ENCODE measurements at regions of chr6 and their contacts with region 1.

Region 1: DNA sequence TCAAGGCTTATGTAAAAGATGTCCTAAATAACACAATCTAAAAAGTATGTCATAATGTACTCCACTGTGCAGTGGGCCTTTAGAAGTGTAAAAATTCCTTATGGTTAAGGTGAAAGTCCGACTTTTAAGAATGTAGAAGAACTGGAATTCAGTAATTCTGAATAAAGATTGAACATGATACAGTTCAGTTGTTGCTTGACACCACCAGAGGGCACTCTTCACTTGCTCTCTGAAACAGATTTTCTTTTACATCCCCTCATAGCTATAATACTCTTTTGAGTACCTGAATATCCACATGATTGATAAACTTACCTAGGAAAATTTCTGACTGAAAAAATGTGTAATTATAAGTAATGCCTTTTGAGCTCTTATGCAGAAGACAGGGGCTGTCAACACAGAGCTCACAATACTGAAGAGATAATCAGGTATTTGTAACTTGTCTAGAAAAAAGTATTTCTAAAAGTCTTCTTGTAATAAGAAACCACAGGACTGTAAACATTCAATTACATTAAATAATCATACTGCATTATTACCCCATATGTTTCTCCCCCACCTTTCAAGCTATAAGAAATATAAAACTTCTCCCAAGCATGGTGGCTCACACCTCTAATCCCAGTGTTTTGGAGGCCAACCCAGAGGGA is 92.1 kb downstream of the POPDC3 start:
- DNase-seq: no peak
- ATAC-seq: peak; percentile 67
- H3K4me3 ChIP-seq: no peak overlapping the region
- H3K27ac ChIP-seq: no peak overlapping the region
- H3K4me1 ChIP-seq: 0 out of 2 replicates have a peak, but pooled peaks cover 2% of the 10 kb centered on the region
- H3K27me3 ChIP-seq: no peaks in the 10 kb centered on the region
- CTCF ChIP-seq: peak; percentile 81; the same call in 1 of the 2 replicates

Region 2: GRCh38 chr6:104784884-104785283 is 302.8 kb before region 1 on chr6:
- CTCF ChIA-PET with region 1: no interaction called
- POLR2A ChIA-PET with region 1: no interaction called
- in situ Hi-C with region 1: no loop called
- intact Hi-C with region 1: no loop called
- DNase-seq: no peak
- ATAC-seq: no peak
- H3K4me3 ChIP-seq: no peak overlapping the region
- H3K27ac ChIP-seq: no peak overlapping the region
- H3K4me1 ChIP-seq: peaks cover 5% of the 10 kb centered on the region; the same call in 1 of the 2 replicates
- H3K27me3 ChIP-seq: no peaks in the 10 kb centered on the region
- CTCF ChIP-seq: no peak

Region 3: GRCh38 chr6:104955927-104956730 is 131.6 kb before region 1 on chr6:
- CTCF ChIA-PET with region 1: no interaction called
- POLR2A ChIA-PET with region 1: interaction called, 11 read pairs
- in situ Hi-C with region 1: no loop called
- intact Hi-C with region 1: no loop called
- DNase-seq: no peak
- ATAC-seq: peak; percentile 57
- H3K4me3 ChIP-seq: peak overlapping the region; percentile 71 to 86
- H3K27ac ChIP-seq: peak overlapping the region; percentile 97
- H3K4me1 ChIP-seq: peaks cover 15% of the 10 kb centered on the region
- H3K27me3 ChIP-seq: no peaks in the 10 kb centered on the region; the same call in 1 of the 2 replicates
- CTCF ChIP-seq: peak; percentile 52

Region 4: DNA sequence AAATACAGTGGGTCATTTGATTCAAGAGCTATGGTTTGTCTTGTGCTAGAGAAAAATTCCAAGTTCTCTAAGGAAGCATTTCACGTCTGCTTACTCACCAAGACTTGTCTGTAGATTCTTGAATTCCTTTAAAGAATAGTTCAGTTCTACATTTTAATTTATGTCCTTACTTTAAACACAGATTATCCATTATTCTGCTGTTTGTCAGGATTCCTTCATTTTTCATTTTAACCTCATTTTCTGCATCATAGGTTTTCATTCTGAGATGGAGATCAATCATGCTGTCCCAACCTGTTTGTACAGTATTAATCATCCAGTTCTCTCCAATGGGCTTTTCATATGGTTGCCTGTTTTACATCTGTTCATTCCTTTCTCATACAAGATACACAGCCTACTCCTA is 116.6 kb after region 1 on chr6:
- CTCF ChIA-PET with region 1: no interaction called
- POLR2A ChIA-PET with region 1: no interaction called
- in situ Hi-C with region 1: no loop called
- intact Hi-C with region 1: no loop called
- DNase-seq: no peak
- ATAC-seq: no peak
- H3K4me3 ChIP-seq: no peak overlapping the region
- H3K27ac ChIP-seq: no peak overlapping the region
- H3K4me1 ChIP-seq: no peaks in the 10 kb centered on the region
- H3K27me3 ChIP-seq: no peaks in the 10 kb centered on the region
- CTCF ChIP-seq: no peak

Region 5: DNA sequence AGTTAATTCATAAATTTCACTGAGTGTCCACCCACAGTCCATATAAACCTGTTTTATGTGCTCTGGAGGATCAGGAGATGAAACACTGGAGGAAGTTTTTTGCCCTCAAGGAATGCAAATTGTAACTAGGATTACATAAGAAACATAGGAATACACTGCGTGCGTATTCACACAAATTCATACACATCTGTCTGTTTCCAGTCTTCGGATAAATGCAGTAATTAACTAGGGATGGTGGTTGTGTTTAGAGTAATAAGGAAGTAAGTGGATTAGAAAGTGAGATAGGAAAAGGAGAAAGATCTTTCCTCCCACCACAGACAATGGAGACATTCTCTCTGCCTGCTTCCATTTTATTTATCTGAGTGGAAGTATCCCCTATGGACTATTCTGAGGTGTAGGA is 127.8 kb after region 1 on chr6:
- CTCF ChIA-PET with region 1: no interaction called
- POLR2A ChIA-PET with region 1: no interaction called
- in situ Hi-C with region 1: no loop called
- intact Hi-C with region 1: no loop called
- DNase-seq: no peak
- ATAC-seq: no peak
- H3K4me3 ChIP-seq: no peak overlapping the region
- H3K27ac ChIP-seq: no peak overlapping the region
- H3K4me1 ChIP-seq: no peaks in the 10 kb centered on the region
- H3K27me3 ChIP-seq: peaks cover 2% of the 10 kb centered on the region; the same call in 1 of the 2 replicates
- CTCF ChIP-seq: no peak

Region 6: GRCh38 chr6:105272786-105273185 is 185.1 kb after region 1 on chr6:
- CTCF ChIA-PET with region 1: no interaction called
- POLR2A ChIA-PET with region 1: no interaction called
- in situ Hi-C with region 1: no loop called
- intact Hi-C with region 1: loop called (anchors 10 kb)
- DNase-seq: no peak
- ATAC-seq: peak; percentile 72
- H3K4me3 ChIP-seq: no peak overlapping the region
- H3K27ac ChIP-seq: no peak overlapping the region
- H3K4me1 ChIP-seq: no peaks in the 10 kb centered on the region
- H3K27me3 ChIP-seq: no peaks in the 10 kb centered on the region
- CTCF ChIP-seq: no peak

Region 7: DNA sequence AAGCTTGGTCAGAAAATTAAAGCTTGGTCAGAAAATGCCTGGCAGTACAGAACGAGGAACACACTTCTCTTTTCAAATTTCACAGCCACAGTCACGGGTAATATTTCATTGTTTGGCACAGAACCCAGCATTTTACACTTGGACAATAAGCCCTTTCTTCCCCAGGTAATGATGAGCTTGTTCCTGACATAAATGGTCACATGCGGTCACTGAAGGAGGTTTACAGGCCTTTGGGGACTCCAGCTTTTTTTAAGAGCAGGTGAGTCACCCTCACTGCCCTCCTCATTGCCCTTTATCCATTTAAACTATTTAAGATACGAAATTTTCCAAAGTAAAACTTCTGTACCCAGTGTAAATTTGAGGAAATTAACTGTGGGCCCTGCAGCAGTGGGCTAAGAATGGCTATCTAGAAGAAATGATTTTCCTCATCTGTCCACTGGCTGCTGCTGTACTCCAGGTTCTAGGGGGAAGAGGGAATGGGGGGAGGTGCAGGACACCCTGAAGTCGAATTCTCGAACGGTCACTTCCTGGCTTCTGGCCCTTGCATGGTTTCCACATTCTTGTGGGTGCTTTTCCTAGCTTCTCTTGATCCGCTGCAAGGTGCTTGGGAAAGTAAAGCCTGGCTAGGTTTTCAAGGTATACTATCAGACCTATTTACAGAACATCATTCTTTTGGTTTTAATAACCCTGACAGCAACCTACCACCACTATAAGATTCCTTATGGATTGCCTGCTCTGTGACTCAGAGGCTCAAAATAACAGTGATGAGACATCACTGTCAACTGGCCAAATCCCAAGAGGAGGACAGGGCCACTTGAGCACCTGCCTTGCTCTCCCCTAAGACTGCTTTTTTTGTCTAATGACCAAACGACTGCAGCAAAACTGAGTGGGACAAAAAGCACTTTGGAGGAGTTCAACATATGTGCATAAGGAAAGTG is 239.4 kb after region 1 on chr6:
- CTCF ChIA-PET with region 1: no interaction called
- POLR2A ChIA-PET with region 1: no interaction called
- in situ Hi-C with region 1: no loop called
- intact Hi-C with region 1: no loop called
- DNase-seq: peak; percentile 66
- ATAC-seq: peak; percentile 71
- H3K4me3 ChIP-seq: no peak overlapping the region
- H3K27ac ChIP-seq: 0 out of 2 replicates have a peak overlapping the region, but pooled peaks have one; percentile 1
- H3K4me1 ChIP-seq: peaks cover 2% of the 10 kb centered on the region; the same call in 1 of the 2 replicates
- H3K27me3 ChIP-seq: no peaks in the 10 kb centered on the region
- CTCF ChIP-seq: no peak

Region 8: GRCh38 chr6:105363100-105363754 is 275.5 kb after region 1 on chr6:
- CTCF ChIA-PET with region 1: no interaction called
- POLR2A ChIA-PET with region 1: interaction called, 6 read pairs
- in situ Hi-C with region 1: no loop called
- intact Hi-C with region 1: loop called (anchors 2 kb)
- DNase-seq: no peak
- ATAC-seq: no peak
- H3K4me3 ChIP-seq: no peak overlapping the region
- H3K27ac ChIP-seq: no peak overlapping the region
- H3K4me1 ChIP-seq: no peaks in the 10 kb centered on the region
- H3K27me3 ChIP-seq: no peaks in the 10 kb centered on the region
- CTCF ChIP-seq: peak; percentile 58; the same call in 1 of the 2 replicates

Region 9: DNA sequence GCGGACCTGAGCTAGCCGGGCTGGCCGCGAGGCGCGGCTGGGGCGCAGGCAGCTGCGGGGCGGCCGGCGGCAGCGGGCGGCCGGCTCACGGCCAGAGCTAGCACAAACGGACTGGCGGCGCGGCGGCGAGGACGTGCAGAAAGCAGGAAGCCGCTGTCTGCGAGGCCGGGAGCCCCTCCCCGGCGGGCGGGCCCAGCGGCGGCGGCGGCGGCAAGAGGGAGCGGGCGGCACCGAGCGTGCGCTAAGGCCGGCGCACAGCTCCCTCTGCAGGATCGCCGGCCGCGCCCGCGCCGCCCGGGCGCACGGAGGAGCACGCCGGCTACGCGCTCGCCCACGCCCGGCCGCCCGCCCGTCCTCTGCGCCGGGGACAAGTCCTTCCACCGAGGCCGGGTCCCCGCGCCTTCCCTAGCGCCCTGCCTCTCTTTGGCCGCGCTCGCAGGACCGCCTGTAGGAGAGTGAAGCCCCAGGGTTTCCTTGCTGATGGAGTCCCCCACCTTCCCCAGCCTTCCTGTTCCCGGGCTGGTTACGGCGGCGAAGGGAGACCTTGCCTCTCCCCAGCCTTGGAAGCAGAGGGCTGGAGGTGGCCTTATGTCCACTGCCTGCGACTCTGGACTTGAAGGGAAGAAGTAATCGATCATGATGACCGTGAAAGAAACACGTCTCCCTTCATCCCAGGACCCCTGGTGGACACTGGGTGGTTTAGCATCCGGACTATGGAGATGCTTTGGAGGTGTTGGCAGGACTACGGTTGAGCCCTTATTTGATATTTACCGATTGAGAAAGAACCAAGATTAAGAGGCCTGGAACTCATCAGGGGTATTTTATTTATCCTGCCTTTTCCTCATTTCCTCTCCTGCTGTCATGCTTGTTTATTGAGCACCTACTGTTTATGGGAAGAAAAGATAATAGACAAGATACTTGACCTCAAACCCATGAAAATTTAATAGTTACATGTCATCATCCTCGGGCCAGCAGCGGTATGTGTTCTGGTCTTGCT is 315.5 kb after region 1 on chr6 and contains the start of gene PREP:
- CTCF ChIA-PET with region 1: interaction called, 8 read pairs
- POLR2A ChIA-PET with region 1: no interaction called
- in situ Hi-C with region 1: no loop called
- intact Hi-C with region 1: loop called (anchors 2 kb)
- DNase-seq: peak; percentile 70
- ATAC-seq: peak; percentile 97
- H3K4me3 ChIP-seq: peak within 1 kb of the TSS; percentile 92 to 96
- H3K27ac ChIP-seq: peak within 1 kb of the TSS; percentile 97
- H3K4me1 ChIP-seq: peaks cover 27% of the 10 kb centered on the region
- H3K27me3 ChIP-seq: no peaks in the 10 kb centered on the region
- CTCF ChIP-seq: peak; percentile 96
- total RNA-seq, gene PREP: 50.4 TPM

Region 10: GRCh38 chr6:105424175-105424783 is 336.6 kb after region 1 on chr6:
- CTCF ChIA-PET with region 1: no interaction called
- POLR2A ChIA-PET with region 1: no interaction called
- in situ Hi-C with region 1: no loop called
- intact Hi-C with region 1: loop called (anchors 2 kb)
- DNase-seq: no peak
- ATAC-seq: peak; percentile 87
- H3K4me3 ChIP-seq: no peak overlapping the region
- H3K27ac ChIP-seq: no peak overlapping the region
- H3K4me1 ChIP-seq: no peaks in the 10 kb centered on the region
- H3K27me3 ChIP-seq: no peaks in the 10 kb centered on the region
- CTCF ChIP-seq: peak; percentile 88

Measured in Panc1 (cell line).